H1 (cell line): ENCODE measurements at regions of chr16 and their contacts with region 1.

Region 1: GRCh38 chr16:75198135-75198600 is 8.8 kb downstream of the CTRB2 start:
- DNase-seq: no peak
- H3K4me3 ChIP-seq: no peak overlapping the region
- H3K27ac ChIP-seq: no peak overlapping the region
- H3K4me1 ChIP-seq: peaks cover 0 to 2% (median 0%) of the 10 kb centered on the region in 4 experiments; a peak in 3 of 7 replicates
- H3K27me3 ChIP-seq: no peaks in the 10 kb centered on the region
- CTCF ChIP-seq: no peak
- EP300 ChIP-seq: no peak
- POLR2A ChIP-seq: no peak
- RAD21 ChIP-seq: no peak

Region 2: DNA sequence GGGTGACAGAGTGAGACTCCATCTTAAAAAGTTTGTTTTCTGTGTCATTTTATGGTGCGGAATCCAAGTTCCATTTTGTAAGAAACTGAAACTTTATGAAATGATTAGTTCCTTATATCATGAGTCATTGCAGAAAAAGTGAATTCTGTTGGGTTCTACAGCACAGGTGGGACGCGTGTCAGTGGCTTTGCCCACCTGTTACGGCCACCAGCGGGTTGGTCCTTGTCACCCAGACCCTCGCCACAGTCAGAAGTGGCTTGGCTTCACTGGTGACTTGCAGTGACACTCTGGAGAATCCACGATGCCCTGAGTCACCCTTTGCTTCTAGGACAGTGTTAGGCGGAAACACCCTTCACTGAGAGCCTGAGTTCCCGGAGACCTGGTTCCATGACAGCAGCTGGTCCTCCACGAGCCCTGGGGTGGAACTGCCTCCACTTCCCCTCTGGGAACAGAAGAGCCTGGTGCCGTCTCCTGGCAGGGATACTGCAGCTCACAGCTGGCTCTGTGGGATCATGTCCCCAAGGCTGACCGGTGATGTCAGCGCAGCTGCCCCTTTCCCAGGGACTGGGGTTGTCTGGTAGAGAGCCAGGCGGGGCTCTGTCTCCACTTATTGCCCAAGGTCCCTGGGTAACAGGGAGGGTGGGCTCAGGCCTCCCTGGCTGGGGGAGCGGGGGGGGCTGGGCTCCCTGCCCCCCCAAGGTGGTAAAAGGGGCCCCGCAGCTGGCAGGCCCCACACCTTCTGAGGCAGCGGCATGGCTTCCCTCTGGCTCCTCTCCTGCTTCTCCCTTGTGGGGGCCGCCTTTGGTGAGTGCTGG is 20.3 kb after region 1 on chr16 and contains the start of gene CTRB1:
- CTCF ChIA-PET with region 1: interaction called, 157 read pairs
- POLR2A ChIA-PET with region 1: interaction called, 9 read pairs
- DNase-seq: no peak
- H3K4me3 ChIP-seq: no peak within 1 kb of the TSS
- H3K27ac ChIP-seq: no peak within 1 kb of the TSS
- H3K4me1 ChIP-seq: no peaks in the 10 kb centered on the region
- H3K27me3 ChIP-seq: no peaks in the 10 kb centered on the region
- CTCF ChIP-seq: no peak
- EP300 ChIP-seq: no peak
- POLR2A ChIP-seq: no peak
- RAD21 ChIP-seq: no peak
- total RNA-seq, gene CTRB1: not detected in 2 replicates

Region 3: GRCh38 chr16:75279305-75279704 is 81.1 kb after region 1 on chr16:
- CTCF ChIA-PET with region 1: interaction called, 11 read pairs
- POLR2A ChIA-PET with region 1: no interaction called
- DNase-seq: no peak
- H3K4me3 ChIP-seq: no peak overlapping the region
- H3K27ac ChIP-seq: no peak overlapping the region
- H3K4me1 ChIP-seq: no peaks in the 10 kb centered on the region
- H3K27me3 ChIP-seq: no peaks in the 10 kb centered on the region
- CTCF ChIP-seq: no peak
- EP300 ChIP-seq: no peak
- POLR2A ChIP-seq: no peak
- RAD21 ChIP-seq: no peak

Region 4: DNA sequence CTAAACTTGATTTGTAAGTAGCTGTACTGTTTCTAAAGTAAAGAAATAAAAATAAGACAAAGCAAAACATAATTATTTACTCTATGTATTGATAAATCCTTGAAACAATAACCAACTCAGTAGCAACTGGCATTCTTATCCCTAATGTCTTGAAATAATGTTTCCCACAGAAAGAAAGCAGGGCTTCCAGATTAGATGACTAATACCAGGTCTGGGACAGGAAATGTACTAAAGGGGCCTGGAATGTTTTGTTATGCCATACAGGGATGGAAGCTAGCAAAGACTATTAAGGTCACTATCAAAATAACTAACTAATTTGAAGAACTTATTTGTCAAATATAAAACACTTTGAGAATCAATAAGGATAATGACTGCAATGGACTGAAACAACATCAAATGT is 153.0 kb after region 1 on chr16:
- CTCF ChIA-PET with region 1: interaction called, 14 read pairs
- POLR2A ChIA-PET with region 1: no interaction called
- DNase-seq: no peak
- H3K4me3 ChIP-seq: no peak overlapping the region
- H3K27ac ChIP-seq: no peak overlapping the region
- H3K4me1 ChIP-seq: no peaks in the 10 kb centered on the region
- H3K27me3 ChIP-seq: no peaks in the 10 kb centered on the region
- CTCF ChIP-seq: no peak
- EP300 ChIP-seq: no peak
- POLR2A ChIP-seq: no peak
- RAD21 ChIP-seq: no peak

Region 5: GRCh38 chr16:75385507-75386152 is 187.5 kb after region 1 on chr16:
- CTCF ChIA-PET with region 1: interaction called, 11 read pairs
- POLR2A ChIA-PET with region 1: no interaction called
- DNase-seq: no peak
- H3K4me3 ChIP-seq: no peak overlapping the region
- H3K27ac ChIP-seq: no peak overlapping the region
- H3K4me1 ChIP-seq: no peaks in the 10 kb centered on the region
- H3K27me3 ChIP-seq: no peaks in the 10 kb centered on the region
- CTCF ChIP-seq: peak in 2 of 3 experiments; percentile 32 to 47; a peak in 2 of 4 replicates
- EP300 ChIP-seq: no peak
- POLR2A ChIP-seq: no peak
- RAD21 ChIP-seq: peak; percentile 64 to 67